ENCODE measurements at regions of chr2 and their contacts with region 1.

Region 1: DNA sequence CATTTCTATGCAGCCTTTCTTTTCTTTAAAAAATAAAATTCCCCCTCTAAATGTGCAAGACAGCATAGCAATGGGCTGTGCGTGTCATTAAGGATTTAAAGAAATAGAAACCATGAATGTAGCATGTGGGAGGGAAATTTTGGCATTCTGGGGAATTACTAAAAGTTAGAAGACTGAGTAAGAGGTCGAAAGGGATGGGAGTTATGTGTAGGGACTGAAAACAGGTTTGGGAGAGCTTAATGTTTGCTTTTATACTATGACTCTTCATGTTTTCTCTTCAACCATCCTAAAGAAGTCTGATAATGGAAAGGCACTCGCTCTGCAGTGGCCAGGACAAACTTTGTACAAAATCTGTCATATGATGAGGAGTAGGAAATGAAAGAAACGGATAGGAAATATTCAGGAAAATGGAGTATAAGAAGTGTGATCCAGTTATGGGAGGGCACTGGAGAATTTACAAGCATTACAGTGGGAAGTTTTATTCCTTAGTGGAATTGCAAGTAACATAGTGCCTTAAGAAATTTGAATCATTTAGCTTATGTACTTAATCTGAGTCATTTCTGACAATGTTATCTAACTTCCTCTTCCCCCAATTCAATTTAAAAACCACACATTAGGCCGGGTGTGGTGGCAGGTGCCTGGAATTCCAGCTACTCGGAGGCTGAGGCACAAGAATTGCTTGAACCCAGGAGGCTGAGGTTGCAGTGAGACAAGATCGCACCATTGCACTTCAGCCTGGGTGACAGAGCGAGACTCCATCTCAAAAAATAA is 20.6 kb downstream of the TMEM87B start:
- DNase-seq: no peak
- CTCF ChIP-seq: no peak

Region 2: GRCh38 chr2:112020561-112020960 is 55.1 kb before region 1 on chr2:
- CTCF ChIA-PET with region 1: no interaction called
- POLR2A ChIA-PET with region 1: no interaction called
- DNase-seq: no peak
- CTCF ChIP-seq: no peak

Region 3: GRCh38 chr2:112087346-112088020 is 11.8 kb after region 1 on chr2:
- CTCF ChIA-PET with region 1: interaction called, 15 read pairs
- POLR2A ChIA-PET with region 1: no interaction called
- DNase-seq: peak; percentile 64
- CTCF ChIP-seq: no peak

Region 4: DNA sequence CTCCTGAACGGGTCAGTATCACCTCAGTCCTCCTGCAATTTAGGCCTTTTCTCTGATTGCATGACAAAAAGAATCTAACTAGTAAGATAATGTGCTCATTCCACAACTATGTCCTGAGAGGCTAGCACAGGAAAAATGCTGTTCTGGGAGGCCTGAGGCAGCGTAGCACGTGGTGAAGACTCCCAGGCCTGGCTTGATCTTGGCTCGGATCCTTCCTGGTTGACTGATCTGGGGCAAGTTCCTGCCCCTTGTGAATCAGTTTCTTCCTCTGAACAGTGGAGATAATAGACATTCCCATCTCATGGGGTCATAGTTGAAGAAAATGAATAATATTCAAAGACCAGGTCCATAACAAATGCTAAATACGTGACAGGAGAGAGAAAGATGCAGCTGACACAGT is 74.8 kb after region 1 on chr2:
- CTCF ChIA-PET with region 1: no interaction called
- POLR2A ChIA-PET with region 1: no interaction called
- DNase-seq: no peak
- CTCF ChIP-seq: no peak

Region 5: DNA sequence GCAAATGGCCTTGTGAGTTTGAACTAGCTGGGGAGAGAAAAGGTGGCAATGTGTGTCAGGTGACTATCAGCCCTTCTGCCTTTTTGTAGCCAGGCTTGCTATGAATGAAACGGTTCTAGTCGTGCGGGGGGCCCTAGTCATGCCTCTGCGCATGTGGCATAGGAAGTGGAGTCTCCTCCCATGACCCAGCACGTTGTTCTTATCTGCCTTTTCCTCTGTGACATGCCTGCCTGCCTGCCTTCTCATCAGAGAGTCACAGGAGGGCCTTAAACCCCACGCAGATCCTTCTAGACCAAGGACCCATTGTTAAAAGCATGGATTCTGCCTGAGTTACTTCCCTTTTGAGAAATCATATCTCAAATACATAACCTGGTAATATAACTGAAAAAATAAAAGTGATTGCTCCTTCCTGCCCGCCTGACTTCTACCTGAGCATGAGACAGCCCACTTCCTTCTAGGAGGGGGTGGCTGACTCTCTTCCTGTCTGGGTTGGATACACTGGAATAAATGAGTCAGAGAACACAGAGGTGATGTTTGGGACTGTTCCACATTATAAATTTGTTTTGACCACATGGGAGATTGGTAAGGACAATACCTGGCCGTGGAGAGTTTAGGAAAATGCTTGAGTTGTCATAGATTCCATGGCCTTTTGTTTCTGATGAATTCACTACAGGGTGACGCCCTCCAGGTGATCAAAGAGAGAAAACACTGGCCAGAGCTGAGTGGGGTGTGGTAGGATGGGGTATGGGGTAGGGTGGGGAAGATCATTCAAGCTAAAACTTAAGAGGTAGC is 112.3 kb after region 1 on chr2:
- CTCF ChIA-PET with region 1: no interaction called
- POLR2A ChIA-PET with region 1: no interaction called
- DNase-seq: no peak
- CTCF ChIP-seq: no peak